MCF 10A (cell line): ENCODE measurements at regions of chr1 and their contacts with region 1.

Region 1: DNA sequence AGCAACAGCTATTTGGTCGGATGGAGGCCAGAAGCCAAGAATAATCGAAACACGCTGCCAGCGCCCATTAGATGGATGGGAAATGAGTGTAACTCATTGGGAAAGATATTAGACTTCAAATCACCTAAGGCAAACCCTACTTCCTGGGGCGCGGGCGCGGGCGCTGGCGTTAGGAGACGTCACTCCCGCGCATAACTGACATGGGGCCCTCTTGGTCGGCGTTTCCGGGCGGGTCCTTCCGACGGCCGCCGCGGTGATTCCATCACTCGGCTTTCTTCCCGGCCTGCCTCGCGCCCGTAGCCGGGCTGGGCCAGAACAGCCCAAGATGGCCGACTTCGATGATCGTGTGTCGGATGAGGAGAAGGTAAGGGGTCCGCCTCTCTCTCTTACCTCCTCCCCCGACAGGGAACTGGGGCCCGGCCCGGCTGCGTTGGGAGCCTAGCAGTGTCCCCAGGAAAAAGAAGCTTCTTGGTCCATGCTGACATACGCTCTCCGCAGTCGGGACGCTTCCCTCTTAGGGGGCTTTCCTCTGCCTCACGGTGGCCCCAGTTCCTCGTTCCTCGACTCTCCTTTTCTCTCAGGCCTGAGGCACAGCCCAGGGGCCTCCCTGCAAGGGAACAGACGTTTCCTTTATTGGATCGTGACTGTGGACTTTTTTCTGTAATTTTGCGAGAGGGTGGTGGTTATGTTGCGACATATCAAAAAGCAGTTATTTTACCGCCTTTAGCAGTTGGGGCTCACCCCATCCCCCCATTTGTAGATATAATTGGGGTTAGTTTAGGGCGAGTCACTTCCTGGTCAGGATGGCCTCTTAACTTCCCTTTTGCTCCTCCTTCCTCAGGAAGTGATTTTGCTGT is at the start of gene CAPZA1:
- DNase-seq: peak; percentile 94
- H3K4me3 Mint-ChIP-seq: peak within 1 kb of the TSS; percentile 97
- H3K27ac Mint-ChIP-seq: peak within 1 kb of the TSS; percentile 95
- H3K4me1 Mint-ChIP-seq: peaks cover 12% of the 10 kb centered on the region
- H3K27me3 Mint-ChIP-seq: no peaks in the 10 kb centered on the region
- CTCF ChIP-seq: no peak
- total RNA-seq, gene CAPZA1: 150 and 174 TPM in 2 replicates

Region 2: DNA sequence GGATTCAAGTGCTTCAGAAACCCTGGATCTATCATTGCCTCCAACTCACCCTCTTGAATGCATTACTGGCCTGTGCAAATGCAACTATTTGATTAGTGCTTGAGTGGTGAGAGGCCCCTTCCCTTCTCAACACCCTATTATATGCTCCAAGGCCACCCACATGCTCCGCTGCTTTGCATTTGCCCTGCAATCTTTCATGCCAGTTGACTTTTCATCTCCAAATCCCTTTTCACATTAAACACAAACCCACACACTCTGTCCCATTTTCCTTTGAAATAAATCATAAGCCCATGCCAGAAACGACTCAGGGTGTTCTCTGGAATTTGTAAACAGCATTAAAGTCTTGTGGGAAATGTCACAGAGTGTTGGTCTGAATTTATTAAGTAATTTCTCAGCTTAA is 302.6 kb before region 1 on chr1:
- CTCF ChIA-PET with region 1: no interaction called
- POLR2A ChIA-PET with region 1: no interaction called
- intact Hi-C with region 1: loop called (anchors 5 kb)
- DNase-seq: no peak
- H3K4me3 Mint-ChIP-seq: no peak overlapping the region
- H3K27ac Mint-ChIP-seq: no peak overlapping the region
- H3K4me1 Mint-ChIP-seq: peaks cover 23% of the 10 kb centered on the region
- H3K27me3 Mint-ChIP-seq: no peaks in the 10 kb centered on the region
- CTCF ChIP-seq: no peak

Region 3: DNA sequence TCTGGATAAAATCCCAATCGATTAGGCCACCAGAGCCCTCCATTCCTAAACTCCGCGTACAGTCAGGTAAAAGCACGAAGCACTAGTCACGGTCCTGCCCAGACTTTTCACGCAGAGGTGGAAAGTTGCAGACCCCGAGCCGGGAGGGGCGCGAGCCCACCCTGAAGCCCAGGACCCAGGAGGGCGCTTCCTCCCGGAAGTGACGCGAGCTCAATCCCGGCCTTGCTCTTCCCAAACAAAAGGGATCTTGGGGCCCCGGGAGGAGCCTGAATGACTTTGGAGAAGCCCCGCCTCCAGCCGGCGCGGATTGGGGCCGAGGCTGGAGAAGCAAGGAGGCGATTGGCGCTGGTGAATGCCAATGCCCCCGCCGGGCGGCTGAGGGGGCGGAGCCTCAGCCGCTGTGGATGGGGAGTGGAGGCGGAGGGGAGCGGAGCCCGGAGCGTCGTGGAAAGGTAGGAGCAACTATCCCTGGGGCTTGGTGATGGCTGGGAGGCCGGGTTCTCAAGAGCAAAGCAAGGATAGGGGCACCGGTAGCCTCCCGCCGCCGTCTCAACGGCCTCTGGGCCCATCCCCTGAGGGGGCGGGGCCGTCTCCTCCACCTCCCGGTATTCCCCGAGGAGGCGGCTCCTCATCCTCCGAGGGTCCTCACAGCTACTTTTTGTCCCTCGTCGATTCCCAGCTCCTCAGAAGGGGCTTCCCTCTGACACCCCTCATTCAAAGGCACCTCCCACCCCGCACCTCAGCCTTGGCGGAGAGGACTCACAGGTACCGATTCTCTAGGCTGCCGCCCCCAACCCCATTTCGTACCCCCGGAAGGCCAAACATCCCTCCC is 223.7 kb before region 1 on chr1 and contains the start of gene CTTNBP2NL:
- CTCF ChIA-PET with region 1: interaction called, 19 read pairs
- POLR2A ChIA-PET with region 1: interaction called, 57 read pairs
- intact Hi-C with region 1: loop called (anchors 1 kb)
- DNase-seq: peak; percentile 97
- H3K4me3 Mint-ChIP-seq: peak within 1 kb of the TSS; percentile 98
- H3K27ac Mint-ChIP-seq: peak within 1 kb of the TSS; percentile 98
- H3K4me1 Mint-ChIP-seq: peaks cover 53% of the 10 kb centered on the region
- H3K27me3 Mint-ChIP-seq: no peaks in the 10 kb centered on the region
- CTCF ChIP-seq: no peak
- total RNA-seq, gene CTTNBP2NL: 41.3 and 48.8 TPM in 2 replicates

Region 4: GRCh38 chr1:112477550-112477949 is 142.2 kb before region 1 on chr1:
- CTCF ChIA-PET with region 1: no interaction called
- POLR2A ChIA-PET with region 1: no interaction called
- intact Hi-C with region 1: no loop called
- DNase-seq: no peak
- H3K4me3 Mint-ChIP-seq: no peak overlapping the region
- H3K27ac Mint-ChIP-seq: no peak overlapping the region
- H3K4me1 Mint-ChIP-seq: no peaks in the 10 kb centered on the region
- H3K27me3 Mint-ChIP-seq: no peaks in the 10 kb centered on the region
- CTCF ChIP-seq: no peak

Region 5: GRCh38 chr1:112544011-112544688 is 75.6 kb before region 1 on chr1:
- CTCF ChIA-PET with region 1: no interaction called
- POLR2A ChIA-PET with region 1: interaction called, 11 read pairs
- intact Hi-C with region 1: no loop called
- DNase-seq: peak; percentile 82
- H3K4me3 Mint-ChIP-seq: no peak overlapping the region
- H3K27ac Mint-ChIP-seq: peak overlapping the region; percentile 13
- H3K4me1 Mint-ChIP-seq: peaks cover 16% of the 10 kb centered on the region
- H3K27me3 Mint-ChIP-seq: no peaks in the 10 kb centered on the region
- CTCF ChIP-seq: no peak

Region 6: GRCh38 chr1:112637254-112638116 is 17.7 kb after region 1 on chr1:
- CTCF ChIA-PET with region 1: interaction called, 7 read pairs
- POLR2A ChIA-PET with region 1: interaction called, 71 read pairs
- intact Hi-C with region 1: no loop called
- DNase-seq: no peak
- H3K4me3 Mint-ChIP-seq: no peak overlapping the region
- H3K27ac Mint-ChIP-seq: peak overlapping the region; percentile 46
- H3K4me1 Mint-ChIP-seq: peaks cover 32% of the 10 kb centered on the region
- H3K27me3 Mint-ChIP-seq: no peaks in the 10 kb centered on the region
- CTCF ChIP-seq: no peak

Region 7: DNA sequence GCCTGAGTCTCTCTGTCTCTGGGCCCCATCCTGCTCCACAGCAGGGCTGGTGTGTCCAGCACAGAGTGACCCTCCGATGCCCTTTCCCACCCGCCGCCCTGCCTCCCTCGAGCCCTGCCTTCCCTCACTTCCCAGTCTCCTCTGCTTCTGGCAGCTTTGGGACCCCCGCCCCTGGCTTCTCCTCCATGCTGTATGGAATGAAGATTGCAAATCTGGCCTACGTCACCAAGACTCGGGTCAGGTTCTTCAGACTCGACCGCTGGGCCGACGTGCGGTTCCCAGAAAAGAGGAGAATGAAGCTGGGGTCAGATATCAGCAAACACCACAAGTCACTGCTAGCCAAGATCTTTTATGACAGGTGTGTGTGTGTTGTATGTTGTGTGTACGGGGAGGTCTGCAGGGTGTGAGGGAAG is 69.0 kb after region 1 on chr1:
- CTCF ChIA-PET with region 1: interaction called, 4 read pairs
- POLR2A ChIA-PET with region 1: interaction called, 11 read pairs
- intact Hi-C with region 1: no loop called
- DNase-seq: no peak
- H3K4me3 Mint-ChIP-seq: no peak overlapping the region
- H3K27ac Mint-ChIP-seq: peak overlapping the region; percentile 96
- H3K4me1 Mint-ChIP-seq: peaks cover 31% of the 10 kb centered on the region
- H3K27me3 Mint-ChIP-seq: no peaks in the 10 kb centered on the region
- CTCF ChIP-seq: no peak

Region 8: GRCh38 chr1:112762541-112763517 is 143.1 kb after region 1 on chr1:
- CTCF ChIA-PET with region 1: no interaction called
- POLR2A ChIA-PET with region 1: no interaction called
- intact Hi-C with region 1: no loop called
- DNase-seq: peak; percentile 56
- H3K4me3 Mint-ChIP-seq: peak overlapping the region; percentile 41
- H3K27ac Mint-ChIP-seq: peak overlapping the region; percentile 82
- H3K4me1 Mint-ChIP-seq: peaks cover 32% of the 10 kb centered on the region
- H3K27me3 Mint-ChIP-seq: no peaks in the 10 kb centered on the region
- CTCF ChIP-seq: no peak